ENCODE measurements at regions of chr13 and their contacts with region 1.

Region 1: GRCh38 chr13:36887758-36888521 is 32.1 kb downstream of the SMAD9 start:
- DNase-seq: peak; percentile 10
- H3K4me3 ChIP-seq: no peak overlapping the region
- H3K27ac ChIP-seq: no peak overlapping the region
- H3K4me1 ChIP-seq: no peaks in the 10 kb centered on the region
- CTCF ChIP-seq: no peak

Region 2: DNA sequence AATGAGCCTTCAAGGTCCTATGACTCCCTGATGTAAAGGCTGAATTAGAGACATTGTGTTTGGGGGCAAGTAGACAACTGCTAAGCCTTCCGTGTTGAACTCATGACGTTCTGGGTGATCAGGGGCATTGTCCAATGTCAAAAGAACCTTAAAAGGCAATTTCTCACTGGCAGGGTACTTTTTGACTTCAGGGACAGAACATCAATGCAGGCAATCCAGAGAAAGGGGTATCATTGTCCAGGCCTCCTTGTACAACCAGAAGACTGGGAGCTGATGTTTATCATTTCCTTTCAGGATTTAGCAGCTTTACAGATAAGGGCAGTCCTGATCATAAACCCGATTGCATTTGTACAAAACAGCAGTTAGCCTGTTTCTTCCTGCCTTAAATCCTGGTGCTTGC is 57.1 kb after region 1 on chr13:
- CTCF ChIA-PET with region 1: no interaction called
- POLR2A ChIA-PET with region 1: interaction called, 10 read pairs
- intact Hi-C with region 1: no loop called
- DNase-seq: no peak
- H3K4me3 ChIP-seq: no peak overlapping the region
- H3K27ac ChIP-seq: no peak overlapping the region
- H3K4me1 ChIP-seq: no peaks in the 10 kb centered on the region
- CTCF ChIP-seq: no peak

Measured in OCI-LY7 (cell line).